ENCODE measurements at regions of chr19 and their contacts with region 1.

Region 1: DNA sequence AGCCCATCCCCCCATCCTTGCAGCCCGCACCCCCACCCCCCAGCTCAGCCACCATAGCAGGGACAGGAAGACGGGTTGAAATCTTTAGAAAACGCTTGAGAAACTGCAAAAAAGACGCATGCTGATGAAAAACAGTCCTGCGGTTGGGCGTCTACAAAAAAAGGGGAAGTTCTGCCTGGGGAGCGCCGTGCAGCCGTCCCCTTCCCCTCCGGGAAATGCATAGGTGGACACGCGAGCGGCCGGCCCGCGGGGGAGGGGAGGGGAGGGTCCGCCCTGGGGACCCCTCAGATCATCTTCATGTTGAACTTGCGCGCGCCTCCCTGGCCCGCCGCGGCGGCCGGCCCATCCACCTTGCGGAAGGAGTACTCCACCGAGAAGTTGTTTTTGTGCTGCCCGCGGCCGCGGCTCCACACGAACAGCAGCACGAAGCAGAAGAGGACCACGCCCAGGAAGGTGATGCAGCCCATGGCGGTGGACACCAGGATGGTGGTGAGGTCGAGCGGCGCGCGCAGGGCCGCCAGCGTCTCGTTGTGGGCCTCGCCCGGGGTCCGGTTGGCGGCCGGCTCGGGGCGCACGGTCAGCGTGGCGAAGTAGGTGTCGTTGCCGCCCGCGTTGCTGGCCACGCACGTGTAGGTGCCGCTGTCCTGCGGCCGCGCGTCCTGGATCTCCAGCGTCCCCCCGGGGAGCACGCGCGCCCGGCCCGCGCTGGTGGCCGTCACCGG is 7.9 kb upstream of the PEAK3 start:
- DNase-seq: no peak
- H3K4me3 ChIP-seq: no peak overlapping the region
- H3K27ac ChIP-seq: no peak overlapping the region
- H3K4me1 ChIP-seq: peaks cover 5% of the 10 kb centered on the region
- H3K27me3 ChIP-seq: peaks cover 43 to 48% of the 10 kb centered on the region in 2 experiments
- CTCF ChIP-seq: no peak
- POLR2A ChIP-seq: no peak

Region 2: DNA sequence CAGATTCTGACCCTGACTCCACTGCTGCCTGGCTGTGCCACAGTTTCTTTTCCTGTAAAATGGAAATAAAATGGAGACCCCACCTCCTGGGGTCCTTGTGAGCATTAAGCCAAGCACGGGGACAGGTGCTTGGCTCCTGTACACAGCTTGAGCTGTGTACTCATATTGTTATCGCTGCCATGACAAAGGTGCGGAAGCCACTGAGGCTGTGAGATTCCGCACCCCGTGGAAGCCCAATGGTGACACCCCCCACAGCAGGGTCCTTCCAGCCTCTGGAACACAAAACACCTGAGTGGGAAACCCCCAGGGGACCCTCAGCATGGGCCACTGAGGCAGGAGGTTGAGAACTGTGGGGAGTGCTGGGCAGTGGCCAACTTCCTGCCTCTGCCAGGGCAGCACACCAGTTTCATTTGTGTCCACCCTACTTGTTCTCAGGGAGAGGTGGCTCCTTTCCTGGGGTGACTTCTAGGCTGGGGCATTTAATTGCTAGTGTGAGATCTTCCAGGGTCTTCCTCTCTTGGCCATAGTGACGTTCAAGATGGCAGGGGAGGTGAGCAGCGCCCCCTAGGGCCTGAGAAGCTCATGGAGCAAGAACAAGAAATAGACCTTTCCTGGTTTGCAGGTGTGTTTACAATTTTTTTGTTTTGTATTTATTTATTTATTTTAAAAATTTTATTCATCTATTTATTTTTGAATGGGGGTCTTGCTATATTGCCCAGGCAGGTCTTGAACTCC is 28.3 kb before region 1 on chr19:
- CTCF ChIA-PET with region 1: interaction called, 14 read pairs
- POLR2A ChIA-PET with region 1: no interaction called
- dilution Hi-C with region 1: no loop called
- intact Hi-C with region 1: no loop called
- DNase-seq: peak; percentile 49
- H3K4me3 ChIP-seq: no peak overlapping the region
- H3K27ac ChIP-seq: no peak overlapping the region
- H3K4me1 ChIP-seq: peaks cover 4% of the 10 kb centered on the region
- H3K27me3 ChIP-seq: no peaks in the 10 kb centered on the region
- CTCF ChIP-seq: peak; percentile 70
- POLR2A ChIP-seq: no peak

Region 3: DNA sequence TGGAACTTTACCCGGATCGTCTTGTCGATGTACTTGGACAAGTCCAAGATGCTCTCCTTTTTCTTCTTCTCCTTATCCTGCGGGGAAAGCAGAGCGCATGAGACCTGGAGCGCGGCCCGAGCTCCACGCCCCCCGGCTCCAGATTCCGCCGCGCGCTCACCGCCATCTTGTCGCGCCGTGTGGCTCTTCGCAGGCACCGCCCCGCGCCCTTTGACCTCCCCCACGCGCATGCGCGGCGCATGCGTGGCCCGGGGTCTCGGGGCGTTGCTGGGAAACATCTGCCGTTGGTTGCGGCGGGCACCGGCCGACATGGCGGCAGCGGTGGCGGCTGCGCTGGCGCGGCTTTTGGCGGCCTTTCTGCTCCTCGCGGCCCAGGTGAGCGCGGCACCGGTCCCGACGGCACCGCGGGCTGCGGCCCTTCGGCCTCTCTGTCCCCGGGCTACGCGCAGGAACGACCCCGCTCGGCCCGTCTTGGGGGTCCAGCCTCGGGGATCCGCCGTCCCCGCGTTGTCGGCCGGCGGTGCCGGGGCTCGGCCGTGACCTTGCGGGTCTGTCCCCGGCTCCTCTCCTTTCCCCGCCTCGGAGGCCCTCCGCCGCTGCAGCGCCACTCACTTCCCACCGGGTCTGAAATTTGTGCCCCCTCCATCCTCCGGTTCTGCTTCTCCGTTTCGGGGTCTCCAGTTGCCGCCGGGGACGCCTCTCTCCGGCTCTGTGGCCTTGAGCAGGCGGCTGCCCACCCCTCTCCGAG is 38.7 kb after region 1 on chr19 and contains the starts of genes LSM7 and SPPL2B:
- CTCF ChIA-PET with region 1: no interaction called
- POLR2A ChIA-PET with region 1: no interaction called
- dilution Hi-C with region 1: no loop called
- intact Hi-C with region 1: loop called (anchors 5 kb)
- DNase-seq: peak; percentile 90
- H3K4me3 ChIP-seq: peak within 1 kb of the TSS; percentile 68 to 94 (median 87)
- H3K27ac ChIP-seq: peak within 1 kb of the TSS; percentile 90
- H3K4me1 ChIP-seq: peaks cover 15% of the 10 kb centered on the region
- H3K27me3 ChIP-seq: no peaks in the 10 kb centered on the region
- CTCF ChIP-seq: no peak
- POLR2A ChIP-seq: peak; percentile 95
- total RNA-seq, gene LSM7: 124 and 131 TPM in 2 replicates
- total RNA-seq, gene SPPL2B: 59.8 and 62.7 TPM in 2 replicates

Region 4: GRCh38 chr19:2381148-2381820 is 91.4 kb after region 1 on chr19:
- CTCF ChIA-PET with region 1: no interaction called
- POLR2A ChIA-PET with region 1: no interaction called
- dilution Hi-C with region 1: no loop called
- intact Hi-C with region 1: no loop called
- DNase-seq: no peak
- H3K4me3 ChIP-seq: no peak overlapping the region
- H3K27ac ChIP-seq: no peak overlapping the region
- H3K4me1 ChIP-seq: no peaks in the 10 kb centered on the region
- H3K27me3 ChIP-seq: peaks cover 0 to 2% of the 10 kb centered on the region in 2 experiments
- CTCF ChIP-seq: no peak
- POLR2A ChIP-seq: no peak

Region 5: DNA sequence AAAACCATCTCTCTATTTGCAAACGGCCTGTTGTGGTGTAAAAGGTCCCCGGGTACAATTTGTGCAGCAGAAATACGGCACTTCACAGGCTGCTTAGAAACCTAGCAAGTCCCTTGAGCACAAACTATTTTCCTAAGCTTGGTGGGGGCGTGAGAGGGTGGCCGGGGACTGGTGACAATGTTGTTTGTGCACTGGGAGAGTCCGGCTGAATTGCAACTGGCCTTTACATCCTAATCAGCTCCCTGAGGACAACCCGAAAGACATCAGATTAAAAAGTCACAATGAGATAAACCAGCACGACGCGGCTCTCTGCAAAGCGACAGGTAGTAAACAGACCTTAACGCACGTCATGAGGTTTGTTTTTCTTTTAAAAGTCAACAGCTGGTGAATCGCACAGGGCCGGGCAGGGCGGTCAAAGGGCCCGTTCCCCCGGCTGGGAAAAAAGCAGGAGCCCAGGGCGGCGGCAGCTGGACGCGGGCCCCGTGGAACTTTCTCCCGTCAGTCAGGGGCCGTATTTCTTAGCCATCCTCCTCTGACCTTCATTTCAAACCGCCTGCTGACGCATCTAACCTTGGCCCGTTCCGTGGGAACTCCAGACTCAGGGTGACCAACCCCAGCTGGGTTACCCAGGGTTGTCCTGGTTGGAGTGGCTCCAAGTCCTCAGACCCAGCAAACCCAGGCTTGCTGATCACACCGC is 298.4 kb after region 1 on chr19:
- CTCF ChIA-PET with region 1: no interaction called
- POLR2A ChIA-PET with region 1: interaction called, 11 read pairs
- dilution Hi-C with region 1: no loop called
- intact Hi-C with region 1: no loop called
- DNase-seq: peak; percentile 23
- H3K4me3 ChIP-seq: no peak overlapping the region
- H3K27ac ChIP-seq: no peak overlapping the region
- H3K4me1 ChIP-seq: peaks cover 3% of the 10 kb centered on the region
- H3K27me3 ChIP-seq: peaks cover 4 to 14% of the 10 kb centered on the region in 2 experiments
- CTCF ChIP-seq: no peak
- POLR2A ChIP-seq: no peak

Measured in endothelial cell of umbilical vein (primary cell).